CD4-positive, alpha-beta T cell (primary cell): ENCODE measurements at regions of chr5 and their contacts with region 1.

Region 1: DNA sequence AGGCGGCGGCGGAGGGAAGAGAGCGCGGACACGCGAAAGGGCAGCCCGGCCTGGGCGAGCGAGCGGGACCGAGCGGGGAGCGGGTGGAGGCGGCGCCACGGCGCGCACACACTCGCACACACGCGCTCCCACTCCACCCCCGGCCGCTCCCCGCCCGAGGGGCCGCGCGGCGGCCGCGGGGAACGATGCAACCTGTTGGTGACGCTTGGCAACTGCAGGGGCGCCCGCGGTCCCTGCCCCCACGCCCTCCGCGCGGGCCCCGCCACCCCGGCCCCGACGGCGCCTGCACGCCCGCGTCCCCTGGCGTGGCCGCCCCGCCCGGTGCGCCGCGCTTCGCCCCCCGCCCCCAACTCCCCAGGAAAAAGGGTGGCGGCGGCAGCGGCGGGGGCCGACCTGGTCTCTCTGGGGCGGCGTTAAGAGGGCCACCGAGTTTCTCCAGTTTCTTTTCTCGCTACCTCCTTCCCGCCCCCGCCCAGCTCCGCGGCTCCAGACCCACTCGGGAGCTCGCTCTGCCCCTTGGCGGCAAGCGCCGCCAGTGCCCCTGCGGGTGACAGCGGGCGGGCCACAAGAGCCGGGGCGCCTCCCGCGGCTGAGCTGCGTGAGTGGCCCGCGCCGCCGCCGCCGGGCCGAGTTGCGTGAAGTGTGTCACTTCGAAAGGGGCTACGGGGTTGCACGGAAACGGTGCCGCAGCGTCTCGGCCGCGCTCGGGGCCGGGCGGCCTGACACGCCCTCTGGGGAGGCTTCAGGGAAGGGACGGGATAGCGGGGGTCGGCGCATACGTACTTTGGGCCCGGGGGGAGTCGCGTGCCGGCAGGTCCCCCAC is at the start of gene NR3C1:
- DNase-seq: peak; percentile 79 to 96 (median 87)
- ATAC-seq: peak; percentile 68
- H3K4me3 ChIP-seq: peak within 1 kb of the TSS; percentile 77
- H3K4me3 Mint-ChIP-seq: peak within 1 kb of the TSS; percentile 96
- H3K27ac ChIP-seq: peak within 1 kb of the TSS; percentile 88 to 98
- H3K27ac Mint-ChIP-seq: peak within 1 kb of the TSS; percentile 98
- H3K4me1 ChIP-seq: peaks cover 38% of the 10 kb centered on the region
- H3K4me1 Mint-ChIP-seq: peaks cover 44% of the 10 kb centered on the region
- H3K27me3 ChIP-seq: no peaks in the 10 kb centered on the region
- H3K27me3 Mint-ChIP-seq: no peaks in the 10 kb centered on the region
- CTCF ChIP-seq: no peak
- total RNA-seq, gene NR3C1: 168 to 191 TPM

Region 2: GRCh38 chr5:143002459-143003328 is 401.1 kb before region 1 on chr5:
- CTCF ChIA-PET with region 1: interaction called, 28 read pairs
- POLR2A ChIA-PET with region 1: interaction called, 98 read pairs
- intact Hi-C with region 1: loop called (anchors 1 to 2 kb)
- DNase-seq: peak in 13 of 14 experiments; percentile 10 to 91 (median 37)
- ATAC-seq: peak; percentile 83
- H3K4me3 ChIP-seq: peak overlapping the region; percentile 3
- H3K4me3 Mint-ChIP-seq: peak overlapping the region; percentile 55
- H3K27ac ChIP-seq: peak overlapping the region; percentile 76 to 87
- H3K27ac Mint-ChIP-seq: peak overlapping the region; percentile 91
- H3K4me1 ChIP-seq: peaks cover 33% of the 10 kb centered on the region
- H3K4me1 Mint-ChIP-seq: peaks cover 48% of the 10 kb centered on the region
- H3K27me3 ChIP-seq: no peaks in the 10 kb centered on the region
- H3K27me3 Mint-ChIP-seq: no peaks in the 10 kb centered on the region
- CTCF ChIP-seq: peak; percentile 73

Region 3: DNA sequence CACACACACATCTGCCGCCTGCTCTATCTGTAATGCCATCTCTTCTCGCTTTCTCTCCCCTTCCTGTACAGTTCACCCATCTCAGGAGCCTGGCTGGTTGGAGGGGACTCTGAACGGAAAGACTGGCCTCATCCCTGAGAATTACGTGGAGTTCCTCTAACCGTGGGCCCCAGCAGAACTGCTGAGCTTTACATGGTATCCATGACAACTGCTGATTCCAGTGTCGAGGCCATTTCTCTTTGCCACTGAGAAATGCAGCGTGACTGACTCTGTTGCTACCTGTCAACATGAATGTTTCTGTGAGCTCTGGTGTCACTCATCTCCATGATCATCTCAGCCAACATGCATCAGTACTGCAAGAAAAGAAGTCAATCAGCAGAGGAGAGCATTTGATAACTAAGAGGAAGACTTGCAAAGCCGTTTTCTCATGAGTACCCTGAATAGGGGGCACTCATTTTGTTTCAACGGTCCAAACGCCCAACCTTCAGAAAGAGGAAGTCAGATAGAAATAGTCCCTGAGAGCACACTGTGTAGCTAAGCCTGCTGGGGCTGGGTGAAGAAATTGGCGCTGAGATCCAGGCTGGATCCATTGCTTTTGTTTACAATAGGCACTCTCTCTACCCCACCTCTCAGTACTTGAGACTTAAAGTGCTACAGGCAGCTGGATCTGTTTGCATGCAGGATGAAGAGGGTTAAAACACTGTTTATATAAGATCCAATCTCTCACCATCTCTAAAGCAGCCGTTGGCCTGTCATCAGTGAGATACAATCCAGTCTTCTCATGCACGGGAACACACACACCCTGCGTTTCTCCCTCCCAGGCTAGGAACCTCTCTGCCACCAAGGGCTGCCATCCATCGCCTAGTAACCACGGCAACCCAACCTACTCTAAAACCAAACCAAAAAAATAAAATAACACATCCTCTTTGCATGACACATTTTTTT is 181.2 kb before region 1 on chr5:
- CTCF ChIA-PET with region 1: interaction called, 4 read pairs
- POLR2A ChIA-PET with region 1: interaction called, 4 read pairs
- intact Hi-C with region 1: loop called in 1 of 2 experiments (anchors 2 kb)
- DNase-seq: peak in 13 of 14 experiments; percentile 25 to 91 (median 48)
- ATAC-seq: peak; percentile 82
- H3K4me3 ChIP-seq: peak overlapping the region; percentile 17
- H3K4me3 Mint-ChIP-seq: peak overlapping the region; percentile 52
- H3K27ac ChIP-seq: peak overlapping the region; percentile 46 to 85
- H3K27ac Mint-ChIP-seq: peak overlapping the region; percentile 87
- H3K4me1 ChIP-seq: peaks cover 37% of the 10 kb centered on the region
- H3K4me1 Mint-ChIP-seq: peaks cover 44% of the 10 kb centered on the region
- H3K27me3 ChIP-seq: no peaks in the 10 kb centered on the region
- H3K27me3 Mint-ChIP-seq: no peaks in the 10 kb centered on the region
- CTCF ChIP-seq: no peak

Region 4: GRCh38 chr5:143328589-143329220 is 75.1 kb before region 1 on chr5:
- CTCF ChIA-PET with region 1: no interaction called
- POLR2A ChIA-PET with region 1: no interaction called
- intact Hi-C with region 1: no loop called
- DNase-seq: no peak
- ATAC-seq: no peak
- H3K4me3 ChIP-seq: no peak overlapping the region
- H3K4me3 Mint-ChIP-seq: no peak overlapping the region
- H3K27ac ChIP-seq: no peak overlapping the region
- H3K27ac Mint-ChIP-seq: peak overlapping the region; percentile 30
- H3K4me1 ChIP-seq: peaks cover 15% of the 10 kb centered on the region
- H3K4me1 Mint-ChIP-seq: peaks cover 55% of the 10 kb centered on the region
- H3K27me3 ChIP-seq: no peaks in the 10 kb centered on the region
- H3K27me3 Mint-ChIP-seq: no peaks in the 10 kb centered on the region
- CTCF ChIP-seq: no peak

Region 5: DNA sequence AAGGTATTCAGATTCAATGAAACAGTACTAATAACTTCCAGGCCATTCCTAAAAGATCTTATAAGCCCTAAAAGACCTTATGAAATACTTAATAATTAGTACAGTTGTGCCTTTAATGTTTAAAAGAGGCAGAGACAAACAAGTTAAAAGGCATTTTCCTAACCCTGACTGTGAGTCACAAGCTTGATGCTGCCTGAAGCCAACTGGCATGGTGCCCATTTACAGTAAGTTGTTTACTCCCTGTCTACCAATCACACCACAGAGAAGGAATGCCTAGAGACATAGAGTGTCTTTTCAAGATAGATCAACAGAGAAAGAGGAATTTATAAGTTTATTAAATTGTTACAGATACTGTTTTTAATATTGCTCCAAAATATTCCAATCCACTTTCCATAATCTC is 48.1 kb before region 1 on chr5:
- CTCF ChIA-PET with region 1: interaction called, 9 read pairs
- POLR2A ChIA-PET with region 1: interaction called, 27 read pairs
- intact Hi-C with region 1: loop called (anchors 5 kb)
- DNase-seq: peak; percentile 40 to 89 (median 63)
- ATAC-seq: peak; percentile 91
- H3K4me3 ChIP-seq: no peak overlapping the region
- H3K4me3 Mint-ChIP-seq: peak overlapping the region; percentile 54
- H3K27ac ChIP-seq: no peak overlapping the region
- H3K27ac Mint-ChIP-seq: peak overlapping the region; percentile 82
- H3K4me1 ChIP-seq: peaks cover 19% of the 10 kb centered on the region
- H3K4me1 Mint-ChIP-seq: peaks cover 85% of the 10 kb centered on the region
- H3K27me3 ChIP-seq: no peaks in the 10 kb centered on the region
- H3K27me3 Mint-ChIP-seq: no peaks in the 10 kb centered on the region
- CTCF ChIP-seq: no peak

Region 6: GRCh38 chr5:143435210-143435657 is 31.4 kb after region 1 on chr5:
- CTCF ChIA-PET with region 1: interaction called, 23 read pairs
- POLR2A ChIA-PET with region 1: interaction called, 250 read pairs
- intact Hi-C with region 1: loop called (anchors 1 to 2 kb)
- DNase-seq: peak in 10 of 14 experiments; percentile 17 to 81 (median 30)
- ATAC-seq: peak; percentile 50
- H3K4me3 ChIP-seq: peak overlapping the region; percentile 60
- H3K4me3 Mint-ChIP-seq: peak overlapping the region; percentile 92
- H3K27ac ChIP-seq: peak overlapping the region; percentile 62 to 68
- H3K27ac Mint-ChIP-seq: peak overlapping the region; percentile 93
- H3K4me1 ChIP-seq: peaks cover 34% of the 10 kb centered on the region
- H3K4me1 Mint-ChIP-seq: peaks cover 73% of the 10 kb centered on the region
- H3K27me3 ChIP-seq: no peaks in the 10 kb centered on the region
- H3K27me3 Mint-ChIP-seq: no peaks in the 10 kb centered on the region
- CTCF ChIP-seq: no peak

Region 7: GRCh38 chr5:143471041-143471521 is 67.3 kb after region 1 on chr5:
- CTCF ChIA-PET with region 1: no interaction called
- POLR2A ChIA-PET with region 1: no interaction called
- intact Hi-C with region 1: no loop called
- DNase-seq: no peak
- ATAC-seq: no peak
- H3K4me3 ChIP-seq: no peak overlapping the region
- H3K4me3 Mint-ChIP-seq: no peak overlapping the region
- H3K27ac ChIP-seq: no peak overlapping the region
- H3K27ac Mint-ChIP-seq: no peak overlapping the region
- H3K4me1 ChIP-seq: no peaks in the 10 kb centered on the region
- H3K4me1 Mint-ChIP-seq: no peaks in the 10 kb centered on the region
- H3K27me3 ChIP-seq: no peaks in the 10 kb centered on the region
- H3K27me3 Mint-ChIP-seq: no peaks in the 10 kb centered on the region
- CTCF ChIP-seq: no peak

Region 8: DNA sequence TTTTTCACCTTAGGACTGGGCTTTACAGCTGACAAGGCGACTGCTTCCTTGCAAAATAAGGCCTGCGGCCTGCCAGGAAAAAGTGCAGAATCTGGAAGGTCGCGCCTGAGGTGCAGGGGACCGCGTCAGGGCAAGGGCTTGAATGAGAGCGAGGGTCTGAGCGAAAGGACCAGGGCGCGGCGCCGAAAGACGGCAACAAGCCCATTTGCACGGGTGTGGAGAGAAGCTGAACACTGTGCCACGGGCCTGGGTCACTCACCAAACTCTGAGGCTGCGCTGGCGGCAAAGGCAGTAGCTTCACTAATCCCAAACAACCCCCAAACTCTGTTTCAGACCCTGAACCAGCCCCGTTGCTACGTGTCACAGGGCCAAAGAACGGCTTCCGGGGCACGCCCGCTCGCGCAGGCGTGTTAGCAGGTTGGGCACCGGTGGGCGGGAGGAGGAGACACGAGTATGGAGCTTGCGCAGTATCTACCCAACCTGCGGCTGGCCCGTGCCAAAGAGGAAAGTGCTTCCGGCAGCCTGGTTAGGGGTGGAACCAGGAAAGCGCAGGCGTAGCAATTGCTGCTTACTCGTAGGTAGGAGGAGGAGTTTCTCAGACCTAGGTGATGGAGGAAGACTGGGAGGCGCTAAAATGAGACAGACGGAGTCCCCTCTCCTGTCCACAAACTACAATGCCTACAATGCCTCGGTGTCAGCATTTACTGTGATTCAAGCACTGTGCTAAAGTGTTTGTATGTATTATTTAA is 766.6 kb after region 1 on chr5 and contains the starts of genes KCTD16 and YIPF5:
- CTCF ChIA-PET with region 1: no interaction called
- POLR2A ChIA-PET with region 1: interaction called, 33 read pairs
- intact Hi-C with region 1: loop called in 1 of 2 experiments (anchors 5 kb)
- DNase-seq: peak; percentile 93 to 99 (median 96)
- ATAC-seq: peak; percentile 96
- H3K4me3 ChIP-seq: peak within 1 kb of the TSS; percentile 79
- H3K4me3 Mint-ChIP-seq: peak within 1 kb of the TSS; percentile 95
- H3K27ac ChIP-seq: peak within 1 kb of the TSS; percentile 91
- H3K27ac Mint-ChIP-seq: peak within 1 kb of the TSS; percentile 95
- H3K4me1 ChIP-seq: peaks cover 11% of the 10 kb centered on the region
- H3K4me1 Mint-ChIP-seq: peaks cover 53% of the 10 kb centered on the region
- H3K27me3 ChIP-seq: no peaks in the 10 kb centered on the region
- H3K27me3 Mint-ChIP-seq: no peaks in the 10 kb centered on the region
- CTCF ChIP-seq: no peak
- total RNA-seq, gene KCTD16: not detected
- total RNA-seq, gene YIPF5: 57.6 to 64.8 TPM